ENCODE measurements at regions of chr5 and their contacts with region 1.

Region 1: DNA sequence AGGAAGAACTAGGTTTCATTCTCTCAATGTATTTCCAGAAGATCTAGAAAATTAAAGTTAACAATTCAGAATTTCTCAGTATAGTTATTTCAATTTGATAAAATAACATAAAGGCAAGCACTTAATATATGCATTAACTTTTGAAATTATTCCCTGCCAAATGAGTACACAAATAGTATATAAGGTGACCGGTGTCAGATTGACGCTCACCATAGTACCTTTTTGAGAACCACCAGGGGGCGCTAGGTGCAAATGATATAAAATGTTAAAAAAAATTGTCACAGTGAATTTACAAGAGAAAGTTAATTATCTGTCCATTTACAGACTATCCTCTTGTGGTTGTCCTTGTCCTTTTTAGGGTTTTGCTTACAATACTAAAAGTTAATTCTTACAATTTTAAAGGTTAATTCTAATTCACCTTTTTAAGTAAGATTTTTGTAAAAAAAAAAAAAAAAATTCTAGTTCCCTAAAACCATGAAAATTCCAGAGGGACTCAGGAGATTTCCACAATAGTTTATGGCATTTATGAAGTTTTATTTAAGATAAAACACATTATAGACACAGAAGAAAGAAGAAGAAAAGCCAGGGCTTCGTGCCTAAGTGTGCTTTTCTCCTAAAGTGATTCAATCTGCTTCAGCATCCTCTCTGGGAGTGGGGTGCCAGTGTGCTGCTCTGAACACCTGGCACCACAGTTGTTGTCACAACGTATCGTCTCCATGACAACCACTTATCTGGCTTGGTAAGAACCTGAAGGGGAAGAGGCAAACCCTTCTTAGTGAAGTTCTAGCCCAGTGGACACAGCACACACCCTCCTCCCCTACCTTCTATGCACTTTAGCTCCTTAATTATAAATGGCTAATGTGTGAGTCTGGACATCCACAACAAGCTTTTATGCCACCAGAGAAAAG is 1.7 kb downstream of the ADAMTS16 start:
- DNase-seq: peak; percentile 7 to 33 (median 23)
- H3K4me3 ChIP-seq: no peak overlapping the region
- H3K4me3 Mint-ChIP-seq: peak overlapping the region in 1 of 2 donors; percentile 83
- H3K27ac ChIP-seq: no peak overlapping the region
- H3K27ac Mint-ChIP-seq: no peak overlapping the region
- H3K4me1 ChIP-seq: no peaks in the 10 kb centered on the region
- H3K4me1 Mint-ChIP-seq: no peaks in the 10 kb centered on the region
- H3K27me3 ChIP-seq: peaks cover 10 to 22% of the 10 kb centered on the region in 2 donors
- H3K27me3 Mint-ChIP-seq: peaks cover 18 to 30% (median 20%) of the 10 kb centered on the region in 3 donors
- CTCF ChIP-seq: peak; percentile 87

Region 2: DNA sequence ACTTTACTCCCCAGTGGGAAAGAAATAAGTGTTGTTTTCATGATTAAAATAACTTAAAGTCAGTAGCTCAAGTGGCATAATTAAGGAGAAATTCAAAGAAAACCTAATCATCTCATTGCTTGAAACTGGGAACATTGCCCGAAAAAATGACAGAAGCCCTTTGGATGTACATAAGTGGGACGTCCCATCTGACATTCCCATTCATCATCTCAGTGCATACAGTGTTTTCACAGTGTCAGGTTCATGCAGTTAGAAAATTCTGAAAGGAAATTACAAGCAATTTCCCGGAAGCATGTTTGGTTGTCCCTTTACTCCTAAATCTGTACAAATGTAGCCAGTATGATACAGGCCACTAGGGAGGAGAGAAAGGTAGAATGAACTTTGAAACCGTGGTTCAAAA is 93.8 kb after region 1 on chr5:
- intact Hi-C with region 1: no loop called
- DNase-seq: no peak
- H3K4me3 ChIP-seq: no peak overlapping the region
- H3K4me3 Mint-ChIP-seq: no peak overlapping the region
- H3K27ac ChIP-seq: no peak overlapping the region
- H3K27ac Mint-ChIP-seq: no peak overlapping the region
- H3K4me1 ChIP-seq: no peaks in the 10 kb centered on the region
- H3K4me1 Mint-ChIP-seq: no peaks in the 10 kb centered on the region
- H3K27me3 ChIP-seq: no peaks in the 10 kb centered on the region
- H3K27me3 Mint-ChIP-seq: no peaks in the 10 kb centered on the region
- CTCF ChIP-seq: no peak

Region 3: DNA sequence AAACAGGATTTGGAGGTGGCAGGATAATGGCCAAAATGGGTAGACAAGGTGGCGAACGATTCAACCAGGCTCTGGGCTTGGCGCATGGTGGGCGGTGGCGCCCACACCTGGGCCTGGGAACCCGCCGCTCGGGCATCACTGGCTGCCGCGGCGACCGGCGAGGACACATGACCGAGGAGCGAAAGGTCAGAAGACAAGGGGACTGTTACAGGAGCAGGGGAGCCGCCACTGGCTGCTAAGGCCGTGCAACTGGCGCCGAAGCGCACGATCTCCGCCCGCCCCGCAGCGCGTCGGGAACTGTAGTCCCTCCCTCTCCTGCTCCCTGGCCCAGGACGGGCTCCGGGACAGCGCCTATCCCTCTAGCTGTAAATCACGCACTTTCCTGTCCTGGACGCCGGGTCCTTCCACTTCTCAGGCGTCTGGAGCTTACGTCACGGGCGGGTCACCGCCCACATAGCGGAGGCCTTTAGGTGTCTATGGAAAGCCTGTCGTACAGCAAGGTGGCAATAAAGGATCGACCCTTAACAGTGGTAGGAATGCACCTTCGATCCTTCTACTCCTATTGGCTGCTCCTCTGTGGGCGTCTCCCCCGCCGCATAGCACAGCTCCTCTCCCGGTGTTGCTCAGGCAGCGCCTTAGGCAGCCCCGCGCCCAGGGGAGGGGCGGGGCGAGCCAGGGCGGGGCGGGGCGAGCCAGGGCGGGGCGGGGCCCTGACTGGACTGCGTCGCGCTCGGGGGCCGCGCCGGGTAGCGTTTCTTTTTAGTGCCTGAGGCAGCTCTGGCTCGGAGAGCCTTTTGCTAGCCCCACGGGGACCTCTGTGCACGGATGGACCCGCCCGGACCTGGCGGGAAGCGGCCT is 280.3 kb after region 1 on chr5 and contains the start of gene ICE1:
- intact Hi-C with region 1: loop called (anchors 5 kb)
- DNase-seq: peak; percentile 97 to 98 (median 97)
- H3K4me3 ChIP-seq: peak within 1 kb of the TSS; percentile 54 to 89 (median 62)
- H3K4me3 Mint-ChIP-seq: peak within 1 kb of the TSS; percentile 92 to 95
- H3K27ac ChIP-seq: peak within 1 kb of the TSS; percentile 85 to 94
- H3K27ac Mint-ChIP-seq: peak within 1 kb of the TSS; percentile 94 to 97 (median 97)
- H3K4me1 ChIP-seq: peaks cover 22 to 34% of the 10 kb centered on the region in 2 donors
- H3K4me1 Mint-ChIP-seq: peaks cover 15% of the 10 kb centered on the region
- H3K27me3 ChIP-seq: no peaks in the 10 kb centered on the region
- H3K27me3 Mint-ChIP-seq: peaks cover 0 to 5% (median 3%) of the 10 kb centered on the region in 3 donors
- CTCF ChIP-seq: no peak
- polyA plus RNA-seq, gene ICE1: 2.4 to 8.2 (median 6.4) TPM